Activated CD4-positive, alpha-beta memory T cell treated with anti-CD3 and anti-CD28 coated beads for 36 hours (primary cell): ENCODE measurements at regions of chr7 and their contacts with region 1.

Region 1: GRCh38 chr7:31261341-31261740 is 79.2 kb downstream of the NEUROD6 start:
- DNase-seq: no peak
- H3K4me3 Mint-ChIP-seq: no peak overlapping the region
- H3K27ac Mint-ChIP-seq: no peak overlapping the region
- H3K4me1 Mint-ChIP-seq: no peaks in the 10 kb centered on the region
- H3K27me3 Mint-ChIP-seq: no peaks in the 10 kb centered on the region

Region 2: GRCh38 chr7:31204071-31204470 is 57.3 kb before region 1 on chr7:
- CTCF ChIA-PET with region 1: no interaction called
- POLR2A ChIA-PET with region 1: no interaction called
- intact Hi-C with region 1: loop called (anchors 10 kb)
- DNase-seq: no peak
- H3K4me3 Mint-ChIP-seq: no peak overlapping the region
- H3K27ac Mint-ChIP-seq: no peak overlapping the region
- H3K4me1 Mint-ChIP-seq: no peaks in the 10 kb centered on the region
- H3K27me3 Mint-ChIP-seq: no peaks in the 10 kb centered on the region

Region 3: DNA sequence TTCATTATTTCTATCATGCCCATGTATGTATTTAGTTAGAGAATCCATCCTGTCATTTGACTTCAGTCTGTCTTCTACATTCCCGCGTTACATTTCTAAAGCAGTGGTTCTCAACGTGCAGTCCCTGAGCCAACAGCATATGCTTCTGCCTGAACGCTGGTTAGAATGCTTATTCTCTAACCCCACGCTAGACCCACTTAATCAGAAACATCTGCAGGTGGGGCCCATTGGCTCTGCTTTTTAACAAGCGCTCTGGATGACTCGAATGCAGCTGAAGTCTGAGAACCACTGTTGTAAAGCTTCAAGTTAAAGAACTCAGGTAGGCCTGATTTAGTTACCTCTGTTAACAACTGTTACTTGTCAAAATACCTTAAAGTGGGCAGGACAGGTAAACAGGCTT is 41.0 kb after region 1 on chr7:
- CTCF ChIA-PET with region 1: no interaction called
- POLR2A ChIA-PET with region 1: no interaction called
- intact Hi-C with region 1: no loop called
- DNase-seq: no peak
- H3K4me3 Mint-ChIP-seq: no peak overlapping the region
- H3K27ac Mint-ChIP-seq: no peak overlapping the region
- H3K4me1 Mint-ChIP-seq: no peaks in the 10 kb centered on the region
- H3K27me3 Mint-ChIP-seq: no peaks in the 10 kb centered on the region